ENCODE measurements at regions of chr22 and their contacts with region 1.

Region 1: DNA sequence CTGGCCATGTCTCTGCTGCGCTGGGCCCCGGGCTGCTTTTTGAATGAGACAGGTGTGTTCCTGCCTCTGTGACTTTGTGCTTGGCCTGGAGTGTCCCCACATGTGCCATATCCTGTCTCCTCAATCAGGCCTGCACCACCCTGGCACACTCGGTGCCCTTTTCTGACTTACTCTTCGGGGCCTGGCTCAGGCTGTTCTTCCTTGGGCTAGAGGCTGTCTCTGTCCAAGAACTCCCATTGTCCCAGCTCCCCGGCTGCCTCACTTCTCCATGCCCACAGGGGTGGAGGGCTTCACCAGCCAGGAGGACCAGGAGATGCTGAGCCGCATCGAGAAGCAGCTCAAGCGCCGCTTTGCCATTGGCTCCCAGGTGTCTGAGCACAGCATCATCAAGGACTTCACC is 23.0 kb downstream of the MCM5 start:
- DNase-seq: no peak
- H3K4me3 ChIP-seq: no peak overlapping the region
- H3K27ac ChIP-seq: no peak overlapping the region
- H3K4me1 ChIP-seq: peaks cover 51% of the 10 kb centered on the region
- H3K27me3 ChIP-seq: no peaks in the 10 kb centered on the region
- CTCF ChIP-seq: no peak

Region 2: GRCh38 chr22:36088292-36088691 is 665.4 kb after region 1 on chr22:
- CTCF ChIA-PET with region 1: no interaction called
- POLR2A ChIA-PET with region 1: interaction called, 12 read pairs
- intact Hi-C with region 1: no loop called
- DNase-seq: peak in 1 of 2 experiments; percentile 6
- H3K4me3 ChIP-seq: no peak overlapping the region
- H3K27ac ChIP-seq: no peak overlapping the region
- H3K4me1 ChIP-seq: peaks cover 9% of the 10 kb centered on the region
- H3K27me3 ChIP-seq: no peaks in the 10 kb centered on the region
- CTCF ChIP-seq: no peak

Measured in PC-9 (cell line).